ENCODE measurements at regions of chr6 and their contacts with region 1.

Region 1: GRCh38 chr6:112087136-112087911 is at the starts of genes FAM229B and TUBE1:
- DNase-seq: peak; percentile 89
- CTCF ChIP-seq: no peak

Region 2: GRCh38 chr6:112076200-112076599 is 11.1 kb before region 1 on chr6:
- CTCF ChIA-PET with region 1: interaction called, 15 read pairs
- POLR2A ChIA-PET with region 1: no interaction called
- DNase-seq: no peak
- CTCF ChIP-seq: no peak

Region 3: DNA sequence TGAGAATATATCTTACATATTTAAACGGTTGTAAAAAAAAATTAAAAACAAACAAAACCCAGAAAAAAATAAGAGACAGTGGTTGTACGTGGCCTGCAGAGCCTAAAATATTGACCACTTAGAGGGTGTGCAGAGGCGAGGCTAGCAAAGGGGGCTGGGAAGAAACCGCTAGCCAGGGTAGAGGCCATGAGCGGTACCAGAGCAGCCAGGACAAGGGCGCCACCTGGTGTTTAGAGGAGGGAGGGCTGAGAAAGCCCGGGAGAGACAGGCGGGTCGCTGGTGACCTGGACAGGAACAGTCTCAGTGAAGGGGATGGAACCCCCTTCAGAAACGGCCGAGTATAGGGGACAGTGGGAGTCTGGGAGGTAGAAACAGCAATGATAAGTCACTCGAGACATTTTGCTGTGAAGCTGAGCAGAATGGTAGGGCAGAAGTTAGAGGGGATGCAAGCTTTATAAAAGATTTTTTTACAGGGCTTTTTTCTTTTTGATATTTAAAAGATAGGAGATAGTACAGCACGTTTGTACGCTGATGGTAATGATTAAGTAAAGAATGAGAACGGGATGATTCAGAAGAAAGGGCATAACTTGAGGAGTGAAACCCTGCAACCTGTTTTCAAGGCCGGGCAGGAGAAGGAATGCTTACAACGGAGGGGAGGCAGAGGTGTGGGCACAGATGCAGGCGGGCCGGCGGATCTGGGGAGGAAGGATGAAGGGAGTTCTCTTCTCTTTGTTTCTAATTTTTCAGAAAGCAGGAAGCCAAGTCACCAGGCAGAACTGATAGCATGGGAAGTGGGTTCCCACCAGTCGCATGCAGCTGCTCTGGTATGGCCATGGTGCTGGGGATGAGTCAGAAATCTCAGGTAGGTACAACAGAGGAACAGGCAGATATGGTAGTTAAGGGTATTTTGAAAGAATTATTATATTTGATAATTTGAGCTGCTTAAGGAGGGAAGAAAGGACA is 76.3 kb after region 1 on chr6:
- CTCF ChIA-PET with region 1: interaction called, 38 read pairs
- POLR2A ChIA-PET with region 1: no interaction called
- DNase-seq: peak; percentile 78
- CTCF ChIP-seq: peak; percentile 98

Region 4: DNA sequence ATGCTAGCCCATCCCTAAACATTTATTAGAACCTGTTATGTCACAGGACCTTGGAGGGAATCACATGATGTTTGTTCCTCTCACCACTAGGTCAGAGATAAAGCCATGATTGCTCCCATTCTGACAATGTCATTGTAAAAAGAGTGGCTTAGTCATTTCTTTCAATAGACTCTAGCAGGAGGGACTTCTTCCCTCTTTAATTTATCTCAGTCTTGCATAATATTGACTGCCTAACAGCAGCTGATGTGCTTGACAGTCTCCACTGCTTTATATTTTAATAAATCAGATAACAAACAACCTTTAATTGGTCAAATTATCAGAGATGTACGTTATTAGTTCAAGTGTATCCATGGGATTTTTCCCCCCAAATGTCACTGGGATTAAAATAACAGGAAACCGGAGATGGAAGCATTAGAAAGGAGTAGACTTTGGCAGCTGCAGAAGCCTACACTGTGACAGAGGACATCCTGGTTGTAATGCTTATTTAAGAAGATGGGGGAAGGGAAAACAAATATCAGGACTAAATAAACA is 127.5 kb after region 1 on chr6:
- CTCF ChIA-PET with region 1: no interaction called
- POLR2A ChIA-PET with region 1: no interaction called
- DNase-seq: no peak
- CTCF ChIP-seq: no peak